Dendritic cell treated with granulocyte-macrophage colony-stimulating factor and Interleukin-4, amounts not matched to agents 40 ng/mL and 50 ng/mL, for 4 days (primary cell): ENCODE measurements at regions of chr2 and their contacts with region 1.

Region 1: DNA sequence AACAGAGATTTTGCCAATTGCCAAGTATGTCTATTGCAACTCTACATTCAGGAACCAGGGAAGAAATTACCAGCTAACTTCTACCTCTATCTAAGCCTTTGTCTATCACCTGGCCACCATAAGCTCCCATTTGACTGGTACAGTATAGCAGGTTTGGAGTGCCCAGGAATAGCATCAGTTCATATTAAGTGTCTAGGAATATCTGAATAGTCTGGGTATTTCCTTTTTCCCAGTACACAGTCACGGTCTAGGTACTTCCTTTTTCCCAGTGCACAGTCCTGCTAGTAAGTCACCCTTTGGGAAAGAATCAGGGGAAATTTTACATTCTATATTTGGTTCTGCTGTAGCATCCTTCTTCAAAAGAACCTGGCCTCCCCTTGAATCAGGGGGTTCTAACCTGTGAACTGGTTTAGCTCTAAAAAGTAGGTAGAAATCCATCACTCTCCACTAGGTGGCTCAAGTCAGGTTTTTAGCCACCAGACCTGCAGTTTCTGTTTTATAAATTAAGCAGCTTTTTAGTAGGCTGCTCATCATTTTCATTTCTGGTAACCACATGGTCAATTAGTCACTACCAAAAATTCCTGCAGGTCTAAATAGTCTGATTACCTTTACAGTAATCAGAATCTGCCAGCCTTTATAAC is 49.3 kb upstream of the DNAJC10 start:
- H3K4me3 Mint-ChIP-seq: no peak overlapping the region
- H3K27ac Mint-ChIP-seq: no peak overlapping the region
- H3K4me1 Mint-ChIP-seq: peaks cover 10% of the 10 kb centered on the region
- H3K27me3 Mint-ChIP-seq: no peaks in the 10 kb centered on the region

Region 2: GRCh38 chr2:182506606-182507005 is 160.2 kb before region 1 on chr2:
- intact Hi-C with region 1: no loop called
- H3K4me3 Mint-ChIP-seq: no peak overlapping the region
- H3K27ac Mint-ChIP-seq: no peak overlapping the region
- H3K4me1 Mint-ChIP-seq: no peaks in the 10 kb centered on the region
- H3K27me3 Mint-ChIP-seq: no peaks in the 10 kb centered on the region

Region 3: GRCh38 chr2:182715896-182716668 is 49.3 kb after region 1 on chr2 and contains the start of gene DNAJC10:
- intact Hi-C with region 1: loop called (anchors 5 kb)
- H3K4me3 Mint-ChIP-seq: no peak within 1 kb of the TSS
- H3K27ac Mint-ChIP-seq: no peak within 1 kb of the TSS
- H3K4me1 Mint-ChIP-seq: peaks cover 24% of the 10 kb centered on the region
- H3K27me3 Mint-ChIP-seq: no peaks in the 10 kb centered on the region